H1 (cell line): ENCODE measurements at regions of chr11 and their contacts with region 1.

Region 1: DNA sequence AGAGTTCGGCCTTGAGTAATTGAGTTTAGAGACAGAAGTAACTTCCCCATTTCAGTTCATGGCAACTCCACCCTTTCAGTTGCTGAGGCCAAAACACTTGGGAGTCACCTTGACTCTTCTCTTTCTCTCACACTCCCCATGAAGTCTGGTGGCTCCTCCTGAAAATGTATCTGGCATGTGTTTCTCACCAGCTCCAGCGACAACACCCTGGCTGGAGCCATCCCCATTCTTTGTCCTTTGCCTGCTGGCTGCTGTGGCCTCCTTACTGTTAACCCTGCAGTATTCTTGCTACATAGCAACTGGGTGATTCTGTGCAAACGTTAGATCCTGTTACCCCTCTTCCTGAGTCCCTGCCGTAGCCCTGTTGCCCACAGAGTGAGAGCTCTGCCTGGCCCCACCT is 23.8 kb downstream of the SLC6A5 start:
- DNase-seq: no peak
- H3K4me3 ChIP-seq: no peak overlapping the region
- H3K27ac ChIP-seq: no peak overlapping the region
- H3K4me1 ChIP-seq: peaks cover 1 to 13% (median 10%) of the 10 kb centered on the region in 4 experiments; a peak in 5 of 7 replicates
- H3K27me3 ChIP-seq: no peaks in the 10 kb centered on the region
- CTCF ChIP-seq: no peak
- EP300 ChIP-seq: no peak
- POLR2A ChIP-seq: no peak
- RAD21 ChIP-seq: no peak

Region 2: GRCh38 chr11:20599221-20600019 is 23.8 kb before region 1 on chr11 and contains the start of gene SLC6A5:
- CTCF ChIA-PET with region 1: interaction called, 12 read pairs
- POLR2A ChIA-PET with region 1: no interaction called
- DNase-seq: peak; percentile 49 to 88
- H3K4me3 ChIP-seq: peak within 1 kb of the TSS in 2 of 4 experiments; percentile 4 to 58; a peak in 2 of 8 replicates
- H3K27ac ChIP-seq: no peak within 1 kb of the TSS
- H3K4me1 ChIP-seq: peaks cover 0 to 13% (median 2%) of the 10 kb centered on the region in 4 experiments; a peak in 5 of 7 replicates
- H3K27me3 ChIP-seq: peaks cover 58 to 96% (median 89%) of the 10 kb centered on the region in 4 experiments
- CTCF ChIP-seq: no peak
- EP300 ChIP-seq: peak in 1 of 2 experiments; percentile 14; a peak in 1 of 3 replicates
- POLR2A ChIP-seq: no peak
- RAD21 ChIP-seq: peak in 1 of 2 experiments; percentile 35; a peak in 2 of 4 replicates
- total RNA-seq, gene SLC6A5: not detected in 2 replicates

Region 3: GRCh38 chr11:20609727-20610707 is 13.2 kb before region 1 on chr11:
- CTCF ChIA-PET with region 1: interaction called, 14 read pairs
- POLR2A ChIA-PET with region 1: interaction called, 3 read pairs
- DNase-seq: peak; percentile 68 to 98
- H3K4me3 ChIP-seq: no peak overlapping the region
- H3K27ac ChIP-seq: no peak overlapping the region
- H3K4me1 ChIP-seq: no peaks in the 10 kb centered on the region; a peak in 2 of 7 replicates
- H3K27me3 ChIP-seq: peaks cover 0 to 4% (median 2%) of the 10 kb centered on the region in 4 experiments; a peak in 3 of 7 replicates
- CTCF ChIP-seq: peak; percentile 89 to 97 (median 95)
- EP300 ChIP-seq: no peak
- POLR2A ChIP-seq: no peak
- RAD21 ChIP-seq: peak; percentile 98 to 100

Region 4: DNA sequence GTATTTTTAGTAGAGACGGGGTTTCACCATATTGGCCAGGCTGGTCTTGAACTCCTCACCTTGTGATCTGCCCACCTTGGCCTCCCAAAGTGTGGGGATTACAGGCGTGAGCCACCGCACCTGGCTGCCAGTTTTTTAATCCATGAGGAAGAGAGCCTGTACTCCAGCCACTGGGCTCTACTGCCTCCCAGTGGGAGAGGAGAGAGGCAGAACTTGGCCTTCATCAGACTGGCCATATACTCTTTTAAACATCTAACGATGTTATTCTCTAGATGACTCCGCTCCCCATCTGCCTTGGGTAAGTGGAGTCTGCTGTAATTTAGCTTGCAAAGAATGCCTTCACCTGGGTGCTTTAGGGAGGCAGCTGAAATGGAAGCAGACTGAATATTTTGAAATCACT is 10.8 kb after region 1 on chr11:
- CTCF ChIA-PET with region 1: interaction called, 16 read pairs
- POLR2A ChIA-PET with region 1: no interaction called
- DNase-seq: no peak
- H3K4me3 ChIP-seq: no peak overlapping the region
- H3K27ac ChIP-seq: no peak overlapping the region
- H3K4me1 ChIP-seq: peaks cover 0 to 5% (median 2%) of the 10 kb centered on the region in 4 experiments; a peak in 3 of 7 replicates
- H3K27me3 ChIP-seq: no peaks in the 10 kb centered on the region
- CTCF ChIP-seq: peak; percentile 36 to 58 (median 53)
- EP300 ChIP-seq: no peak
- POLR2A ChIP-seq: no peak
- RAD21 ChIP-seq: peak; percentile 68 to 73

Region 5: DNA sequence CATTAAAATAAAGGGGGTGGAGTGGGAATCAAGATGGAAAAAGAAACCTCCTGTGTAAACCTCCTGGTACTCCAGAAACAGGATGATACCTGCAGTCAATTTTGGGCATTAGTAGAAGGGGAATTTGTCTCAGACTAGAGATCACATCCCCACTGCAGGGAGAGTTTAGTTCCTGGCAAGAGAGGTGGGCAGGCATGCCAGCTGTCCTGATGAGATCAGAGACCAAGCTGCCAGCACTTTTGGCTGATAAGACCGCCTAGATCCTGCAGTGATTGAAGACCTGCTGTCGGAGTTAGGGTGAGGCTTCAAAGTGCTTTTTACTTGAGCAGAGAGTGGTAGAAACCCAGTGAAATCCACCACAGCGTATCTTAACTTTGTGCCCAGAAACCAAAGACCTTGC is 16.4 kb after region 1 on chr11:
- CTCF ChIA-PET with region 1: interaction called, 16 read pairs
- POLR2A ChIA-PET with region 1: no interaction called
- DNase-seq: no peak
- H3K4me3 ChIP-seq: no peak overlapping the region
- H3K27ac ChIP-seq: no peak overlapping the region
- H3K4me1 ChIP-seq: peaks cover 0 to 5% (median 2%) of the 10 kb centered on the region in 4 experiments; a peak in 3 of 7 replicates
- H3K27me3 ChIP-seq: no peaks in the 10 kb centered on the region
- CTCF ChIP-seq: no peak
- EP300 ChIP-seq: no peak
- POLR2A ChIP-seq: no peak
- RAD21 ChIP-seq: no peak

Region 6: GRCh38 chr11:21142007-21142406 is 518.8 kb after region 1 on chr11:
- CTCF ChIA-PET with region 1: no interaction called
- POLR2A ChIA-PET with region 1: no interaction called
- DNase-seq: peak in 1 of 2 experiments; percentile 56
- H3K4me3 ChIP-seq: no peak overlapping the region
- H3K27ac ChIP-seq: no peak overlapping the region
- H3K4me1 ChIP-seq: peaks cover 0 to 6% (median 2%) of the 10 kb centered on the region in 4 experiments; a peak in 3 of 7 replicates
- H3K27me3 ChIP-seq: no peaks in the 10 kb centered on the region
- CTCF ChIP-seq: peak in 2 of 3 experiments; percentile 53 to 56; a peak in 3 of 4 replicates
- EP300 ChIP-seq: no peak
- POLR2A ChIP-seq: no peak
- RAD21 ChIP-seq: peak; percentile 77 to 81